ENCODE measurements at regions of chr19 and their contacts with region 1.

Region 1: GRCh38 chr19:37227996-37228395 is 10.0 kb downstream of the ZNF383 start:
- DNase-seq: no peak
- H3K4me3 ChIP-seq: no peak overlapping the region
- H3K27ac ChIP-seq: no peak overlapping the region
- H3K4me1 ChIP-seq: no peaks in the 10 kb centered on the region
- H3K27me3 ChIP-seq: no peaks in the 10 kb centered on the region
- CTCF ChIP-seq: peak in 3 of 5 experiments; percentile 19 to 31 (median 23)
- EP300 ChIP-seq: no peak
- POLR2A ChIP-seq: no peak

Region 2: GRCh38 chr19:36245210-36246005 is 982.6 kb before region 1 on chr19:
- in situ Hi-C with region 1: loop called in 1 of 4 experiments (anchors 25 kb)
- intact Hi-C with region 1: no loop called
- DNase-seq: no peak
- H3K4me3 ChIP-seq: peak overlapping the region in 3 of 4 donors; percentile 6 to 42 (median 29)
- H3K27ac ChIP-seq: no peak overlapping the region
- H3K4me1 ChIP-seq: no peaks in the 10 kb centered on the region
- H3K27me3 ChIP-seq: no peaks in the 10 kb centered on the region
- CTCF ChIP-seq: no peak
- EP300 ChIP-seq: no peak
- POLR2A ChIP-seq: no peak

Region 3: DNA sequence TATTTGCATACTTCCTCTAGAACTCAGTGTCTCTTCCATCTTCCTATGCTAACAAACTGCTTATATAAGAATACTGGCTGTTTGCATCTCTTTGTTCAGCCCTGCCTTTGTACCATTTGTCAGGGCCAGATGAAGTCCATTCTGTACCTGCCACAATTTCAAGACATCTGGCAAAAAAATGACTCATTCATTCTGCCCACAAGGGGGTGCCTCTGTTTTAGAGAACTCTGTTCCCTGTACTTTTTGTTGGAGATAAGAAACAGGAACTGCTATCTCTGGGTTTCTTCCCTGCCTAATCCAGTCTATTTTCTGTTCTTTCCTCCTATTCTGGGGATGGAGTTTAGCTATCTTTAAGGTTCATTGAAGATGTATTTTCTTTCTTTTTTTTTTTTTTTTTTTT is 288.8 kb before region 1 on chr19:
- in situ Hi-C with region 1: no loop called
- intact Hi-C with region 1: no loop called
- DNase-seq: no peak
- H3K4me3 ChIP-seq: no peak overlapping the region
- H3K27ac ChIP-seq: no peak overlapping the region
- H3K4me1 ChIP-seq: no peaks in the 10 kb centered on the region
- H3K27me3 ChIP-seq: no peaks in the 10 kb centered on the region
- CTCF ChIP-seq: no peak
- EP300 ChIP-seq: no peak
- POLR2A ChIP-seq: no peak

Region 4: GRCh38 chr19:37095859-37096258 is 132.1 kb before region 1 on chr19:
- in situ Hi-C with region 1: no loop called
- intact Hi-C with region 1: no loop called
- DNase-seq: no peak
- H3K4me3 ChIP-seq: no peak overlapping the region
- H3K27ac ChIP-seq: no peak overlapping the region
- H3K4me1 ChIP-seq: no peaks in the 10 kb centered on the region
- H3K27me3 ChIP-seq: no peaks in the 10 kb centered on the region
- CTCF ChIP-seq: no peak
- EP300 ChIP-seq: no peak
- POLR2A ChIP-seq: no peak

Region 5: GRCh38 chr19:37303591-37304550 is 75.9 kb after region 1 on chr19:
- in situ Hi-C with region 1: no loop called
- intact Hi-C with region 1: no loop called
- DNase-seq: peak; percentile 35
- H3K4me3 ChIP-seq: peak overlapping the region; percentile 11 to 29 (median 18)
- H3K27ac ChIP-seq: peak overlapping the region in 1 of 4 donors; percentile 48
- H3K4me1 ChIP-seq: no peaks in the 10 kb centered on the region
- H3K27me3 ChIP-seq: no peaks in the 10 kb centered on the region
- CTCF ChIP-seq: no peak
- EP300 ChIP-seq: no peak
- POLR2A ChIP-seq: no peak

Measured in transverse colon (tissue), 4 donors.